ENCODE measurements at regions of chr17 and their contacts with region 1.

Region 1: DNA sequence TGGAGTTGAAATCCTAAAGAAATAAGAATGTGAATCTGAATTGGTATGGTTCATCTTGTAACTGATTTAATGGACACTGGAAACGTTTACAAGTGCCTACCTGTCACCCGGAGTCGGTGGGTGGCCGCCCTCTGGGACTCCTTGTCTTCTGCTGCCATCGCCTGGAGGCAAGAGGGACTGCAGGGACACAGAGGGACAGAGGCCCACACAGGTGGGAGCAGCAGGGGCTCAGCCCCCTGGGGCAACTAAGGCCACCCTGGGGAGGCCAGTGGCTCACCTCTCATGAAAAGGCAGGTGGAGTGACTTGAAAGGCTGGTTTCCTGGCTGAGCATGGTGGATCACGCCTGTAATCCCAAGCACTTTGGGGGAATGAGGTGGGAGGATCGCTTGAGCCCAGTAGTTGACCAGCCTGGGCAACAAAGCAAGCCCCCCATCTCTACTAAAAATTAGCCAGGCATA is 23.2 kb downstream of the TMEM92 start:
- DNase-seq: no peak
- H3K4me3 ChIP-seq: no peak overlapping the region
- H3K27ac ChIP-seq: no peak overlapping the region
- H3K4me1 ChIP-seq: peaks cover 0 to 4% (median 2%) of the 10 kb centered on the region in 4 donors
- H3K27me3 ChIP-seq: no peaks in the 10 kb centered on the region
- CTCF ChIP-seq: peak in 2 of 3 experiments; percentile 91 to 99
- EP300 ChIP-seq: no peak
- POLR2A ChIP-seq: no peak

Region 2: GRCh38 chr17:50094753-50095619 is 202.4 kb before region 1 on chr17 and contains the start of gene PDK2:
- intact Hi-C with region 1: loop called (anchors 5 kb)
- DNase-seq: peak; percentile 99
- H3K4me3 ChIP-seq: peak within 1 kb of the TSS; percentile 77 to 96 (median 86)
- H3K27ac ChIP-seq: peak within 1 kb of the TSS; percentile 88 to 93 (median 90)
- H3K4me1 ChIP-seq: peaks cover 37 to 56% (median 54%) of the 10 kb centered on the region in 4 donors
- H3K27me3 ChIP-seq: no peaks in the 10 kb centered on the region
- CTCF ChIP-seq: peak in 1 of 3 experiments; percentile 31
- EP300 ChIP-seq: no peak
- POLR2A ChIP-seq: peak; percentile 63
- total RNA-seq, gene PDK2: 31.6 to 118 (median 61.4) TPM